Heart right ventricle (tissue), 16 donors: ENCODE measurements at regions of chr14 and their contacts with region 1.

Region 1: DNA sequence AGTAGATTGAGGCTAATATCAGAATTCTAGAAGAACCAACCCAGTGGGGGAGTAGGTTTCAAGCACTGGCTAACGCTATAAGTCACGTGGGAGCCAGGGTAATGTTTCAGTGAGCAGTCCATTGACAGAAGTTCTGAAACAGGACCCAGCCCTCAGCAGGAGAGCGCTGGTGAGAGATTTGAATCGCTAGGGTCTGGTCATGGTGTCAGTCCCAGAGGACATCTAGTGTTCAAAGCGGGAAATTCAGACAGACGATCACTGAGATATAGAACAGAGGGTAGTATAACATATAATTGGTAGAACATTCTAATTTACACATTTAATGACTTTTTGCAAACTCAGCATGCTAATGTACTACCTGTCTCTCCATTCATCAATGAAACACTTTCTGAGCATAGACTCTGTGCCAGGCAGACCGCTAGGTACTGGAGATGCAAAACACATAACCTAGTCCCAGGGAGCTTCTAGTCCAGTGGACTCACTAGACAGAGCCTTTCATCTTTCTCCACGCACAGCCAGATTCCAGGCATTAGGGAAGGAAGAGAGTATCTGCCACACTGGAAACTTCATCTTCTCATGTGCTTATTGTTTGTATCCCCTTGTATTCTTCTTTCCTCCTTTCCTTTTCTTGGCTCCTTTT is 35.4 kb upstream of the RNASE3 start:
- DNase-seq: peak in 1 of 2 donors; percentile 57
- ATAC-seq: peak; percentile 82 to 96 (median 90)
- H3K4me3 ChIP-seq: no peak overlapping the region
- H3K27ac ChIP-seq: no peak overlapping the region
- H3K4me1 ChIP-seq: peaks cover 0 to 7% (median 0%) of the 10 kb centered on the region in 9 donors
- H3K27me3 ChIP-seq: peaks cover 0 to 22% (median 9%) of the 10 kb centered on the region in 7 donors
- CTCF ChIP-seq: peak; percentile 55 to 82 (median 77)

Region 2: DNA sequence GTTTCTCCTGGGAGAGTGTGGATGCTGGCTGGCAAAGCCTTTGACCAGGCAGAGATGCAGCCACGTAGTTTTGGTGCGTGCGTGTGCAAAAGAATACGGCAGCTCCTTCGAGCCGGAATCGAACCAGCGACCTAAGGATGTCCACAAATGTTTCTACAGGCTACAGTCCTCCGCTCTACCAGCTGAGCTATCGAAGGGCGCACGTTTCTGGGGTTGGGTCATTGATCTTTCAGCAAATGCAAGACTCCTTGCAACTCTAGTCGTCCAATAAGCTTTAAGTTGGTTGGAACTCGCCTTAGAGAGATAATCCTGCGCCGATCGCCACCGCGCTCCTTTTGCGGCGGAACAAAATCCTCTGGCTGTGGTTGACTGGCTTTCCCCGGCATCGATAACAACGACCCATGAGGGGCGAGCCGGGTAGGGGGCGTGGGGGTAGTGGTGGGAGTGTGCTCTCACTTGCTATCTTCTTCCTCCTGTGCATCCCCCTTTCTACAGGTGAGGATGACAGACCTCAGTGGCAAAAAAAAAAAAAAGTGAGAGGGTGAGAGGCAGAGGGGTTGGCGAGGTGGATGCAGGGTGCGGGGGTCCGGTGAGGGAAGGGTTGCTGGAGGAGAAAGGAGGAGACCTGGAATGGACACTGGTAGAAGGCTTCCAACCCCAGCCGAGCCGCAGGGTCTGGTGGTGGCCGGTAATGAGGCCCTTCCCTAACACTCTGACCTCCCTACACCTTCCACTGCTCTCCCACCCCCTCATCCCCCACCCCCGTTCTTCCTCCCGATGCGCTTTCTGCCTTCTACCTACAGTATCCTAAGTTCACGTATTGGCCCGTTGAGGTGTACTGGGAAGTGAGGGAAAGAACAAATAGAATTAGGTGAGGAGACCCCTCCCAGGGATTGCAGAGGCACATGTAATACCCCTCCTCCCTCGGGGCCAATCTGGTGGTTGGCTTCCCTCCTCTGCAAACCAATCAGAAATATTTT is 202.5 kb before region 1 on chr14:
- intact Hi-C with region 1: no loop called
- DNase-seq: no peak
- ATAC-seq: peak in 1 of 8 donors; percentile 15
- H3K4me3 ChIP-seq: no peak overlapping the region
- H3K27ac ChIP-seq: no peak overlapping the region
- H3K4me1 ChIP-seq: peaks cover 0 to 6% (median 0%) of the 10 kb centered on the region in 9 donors
- H3K27me3 ChIP-seq: peaks cover 14 to 99% (median 91%) of the 10 kb centered on the region in 7 donors
- CTCF ChIP-seq: no peak

Region 3: GRCh38 chr14:20697273-20698017 is 158.3 kb before region 1 on chr14:
- intact Hi-C with region 1: loop called (anchors 1 to 5 kb)
- DNase-seq: peak; percentile 37 to 48
- ATAC-seq: peak; percentile 69 to 87 (median 76)
- H3K4me3 ChIP-seq: no peak overlapping the region
- H3K27ac ChIP-seq: no peak overlapping the region
- H3K4me1 ChIP-seq: peaks cover 0 to 10% (median 0%) of the 10 kb centered on the region in 9 donors
- H3K27me3 ChIP-seq: no peaks in the 10 kb centered on the region
- CTCF ChIP-seq: peak; percentile 63 to 87 (median 82)

Region 4: DNA sequence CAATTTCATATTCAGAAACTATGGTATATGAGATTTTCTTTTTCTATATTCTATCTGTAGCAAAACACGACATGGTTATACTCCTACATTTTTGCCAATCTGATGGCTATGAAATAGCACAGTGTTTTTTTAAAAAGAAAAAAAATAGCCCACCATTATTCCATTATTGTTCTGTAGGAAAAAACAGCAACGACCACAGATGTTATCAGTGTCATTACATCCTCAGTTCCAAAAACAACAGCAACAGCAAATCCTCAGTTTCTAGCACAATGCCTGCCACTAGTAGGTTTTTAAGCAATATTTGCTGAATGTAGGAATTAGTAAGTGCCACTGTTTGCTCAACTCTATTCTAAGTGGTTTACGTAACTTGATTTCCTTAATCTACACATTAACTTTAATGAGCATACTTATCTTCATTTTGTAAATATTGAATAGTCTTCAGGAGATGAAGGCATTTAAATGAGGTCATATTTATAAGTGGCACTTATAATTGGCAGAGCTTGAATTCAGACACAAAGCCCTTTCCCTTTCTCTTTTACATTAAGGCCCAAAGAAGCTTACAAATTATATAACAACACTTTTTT is 66.5 kb before region 1 on chr14:
- intact Hi-C with region 1: no loop called
- DNase-seq: peak in 1 of 2 donors; percentile 11
- ATAC-seq: peak in 5 of 8 donors; percentile 49 to 79 (median 58)
- H3K4me3 ChIP-seq: no peak overlapping the region
- H3K27ac ChIP-seq: peak overlapping the region in 7 of 10 donors; percentile 20 to 70 (median 45)
- H3K4me1 ChIP-seq: peaks cover 0 to 36% (median 11%) of the 10 kb centered on the region in 9 donors
- H3K27me3 ChIP-seq: no peaks in the 10 kb centered on the region
- CTCF ChIP-seq: no peak

Region 5: GRCh38 chr14:20799892-20800544 is 55.8 kb before region 1 on chr14:
- intact Hi-C with region 1: loop called in 1 of 10 experiments (anchors 10 kb)
- DNase-seq: peak; percentile 44 to 59
- ATAC-seq: peak; percentile 62 to 77 (median 76)
- H3K4me3 ChIP-seq: peak overlapping the region; percentile 43 to 66 (median 60)
- H3K27ac ChIP-seq: peak overlapping the region; percentile 56 to 91 (median 83)
- H3K4me1 ChIP-seq: peaks cover 3 to 68% (median 28%) of the 10 kb centered on the region in 9 donors
- H3K27me3 ChIP-seq: no peaks in the 10 kb centered on the region
- CTCF ChIP-seq: no peak

Region 6: GRCh38 chr14:20904393-20905029 is 48.7 kb after region 1 on chr14:
- intact Hi-C with region 1: no loop called
- DNase-seq: no peak
- ATAC-seq: no peak
- H3K4me3 ChIP-seq: no peak overlapping the region
- H3K27ac ChIP-seq: no peak overlapping the region
- H3K4me1 ChIP-seq: peaks cover 0 to 5% (median 0%) of the 10 kb centered on the region in 9 donors
- H3K27me3 ChIP-seq: peaks cover 0 to 6% (median 0%) of the 10 kb centered on the region in 7 donors
- CTCF ChIP-seq: no peak

Region 7: DNA sequence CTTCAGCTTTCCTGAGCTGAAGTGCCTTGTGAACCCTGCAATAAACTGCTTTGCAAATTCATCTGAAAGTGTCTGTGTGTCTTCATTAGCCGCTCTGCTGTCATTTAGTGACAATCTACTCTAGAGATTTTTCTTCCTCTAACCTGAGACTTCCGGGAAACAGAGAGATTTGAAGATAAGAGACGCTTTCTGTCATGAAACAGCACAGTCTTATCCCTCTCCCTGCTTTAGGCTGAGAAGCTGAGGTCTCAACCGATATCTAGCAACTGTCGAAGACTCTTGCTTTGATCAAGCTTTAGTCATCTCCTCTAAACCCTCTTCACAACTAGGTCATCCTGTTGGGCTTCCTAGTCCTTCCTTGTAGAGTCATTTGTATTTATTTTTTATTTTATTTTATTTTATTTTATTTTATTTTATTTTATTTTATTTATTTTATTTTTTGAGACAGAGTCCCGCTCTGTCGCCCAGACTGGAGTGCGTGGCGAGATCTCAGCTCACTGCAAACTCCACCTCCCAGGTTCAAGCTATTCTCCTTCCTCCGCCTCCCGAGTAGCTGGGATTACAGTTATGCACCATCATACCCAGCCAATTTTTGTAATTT is 100.7 kb after region 1 on chr14:
- intact Hi-C with region 1: loop called in 1 of 10 experiments (anchors 5 kb)
- DNase-seq: no peak
- ATAC-seq: no peak
- H3K4me3 ChIP-seq: no peak overlapping the region
- H3K27ac ChIP-seq: no peak overlapping the region
- H3K4me1 ChIP-seq: peaks cover 0 to 18% (median 0%) of the 10 kb centered on the region in 9 donors
- H3K27me3 ChIP-seq: peaks cover 0 to 14% (median 10%) of the 10 kb centered on the region in 7 donors
- CTCF ChIP-seq: no peak

Region 8: DNA sequence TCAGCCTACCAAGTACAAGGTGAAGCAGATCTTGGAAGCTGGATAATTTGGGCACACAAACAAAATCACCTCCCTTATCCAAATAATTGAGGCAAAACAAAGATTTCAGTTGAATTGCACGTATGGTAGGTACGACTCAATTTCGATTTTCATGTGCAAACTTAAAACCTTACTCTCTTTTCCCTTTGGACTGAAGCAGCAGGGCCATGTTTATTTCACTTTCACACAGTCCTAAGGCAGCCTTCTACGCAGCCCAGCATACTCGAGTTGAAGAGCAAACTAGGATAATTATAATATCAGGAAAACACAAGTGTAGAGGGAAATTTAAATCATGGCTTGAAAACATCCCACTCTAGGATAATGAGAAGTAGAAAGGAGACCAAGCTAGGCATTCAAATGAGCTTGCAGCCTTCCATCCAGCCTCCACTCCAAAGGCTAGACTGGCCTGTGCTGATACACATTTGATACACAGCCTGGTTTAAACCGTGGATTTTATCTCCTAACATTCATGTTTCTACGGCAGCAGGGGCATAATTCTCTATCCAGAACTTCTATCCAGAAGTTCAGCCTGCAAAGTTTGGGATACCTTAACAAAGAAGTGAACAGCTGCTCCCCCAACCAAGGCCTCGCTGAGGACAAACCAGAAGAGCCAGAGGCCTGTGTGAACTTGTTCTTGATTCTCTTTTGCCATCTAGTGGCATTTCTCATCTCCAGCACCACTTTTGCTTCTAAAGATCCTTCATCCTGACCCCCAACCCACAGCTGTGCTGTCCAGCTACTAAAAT is 184.0 kb after region 1 on chr14:
- intact Hi-C with region 1: loop called in 5 of 10 experiments (anchors 2 to 10 kb)
- DNase-seq: peak in 1 of 2 donors; percentile 64
- ATAC-seq: peak; percentile 62 to 84 (median 72)
- H3K4me3 ChIP-seq: peak overlapping the region in 2 of 10 donors; percentile 12 to 13
- H3K27ac ChIP-seq: peak overlapping the region in 9 of 10 donors; percentile 63 to 87 (median 77)
- H3K4me1 ChIP-seq: peaks cover 13 to 53% (median 41%) of the 10 kb centered on the region in 9 donors
- H3K27me3 ChIP-seq: peaks cover 0 to under 1% (median 0%) of the 10 kb centered on the region in 7 donors
- CTCF ChIP-seq: peak; percentile 45 to 82 (median 73)

Region 9: DNA sequence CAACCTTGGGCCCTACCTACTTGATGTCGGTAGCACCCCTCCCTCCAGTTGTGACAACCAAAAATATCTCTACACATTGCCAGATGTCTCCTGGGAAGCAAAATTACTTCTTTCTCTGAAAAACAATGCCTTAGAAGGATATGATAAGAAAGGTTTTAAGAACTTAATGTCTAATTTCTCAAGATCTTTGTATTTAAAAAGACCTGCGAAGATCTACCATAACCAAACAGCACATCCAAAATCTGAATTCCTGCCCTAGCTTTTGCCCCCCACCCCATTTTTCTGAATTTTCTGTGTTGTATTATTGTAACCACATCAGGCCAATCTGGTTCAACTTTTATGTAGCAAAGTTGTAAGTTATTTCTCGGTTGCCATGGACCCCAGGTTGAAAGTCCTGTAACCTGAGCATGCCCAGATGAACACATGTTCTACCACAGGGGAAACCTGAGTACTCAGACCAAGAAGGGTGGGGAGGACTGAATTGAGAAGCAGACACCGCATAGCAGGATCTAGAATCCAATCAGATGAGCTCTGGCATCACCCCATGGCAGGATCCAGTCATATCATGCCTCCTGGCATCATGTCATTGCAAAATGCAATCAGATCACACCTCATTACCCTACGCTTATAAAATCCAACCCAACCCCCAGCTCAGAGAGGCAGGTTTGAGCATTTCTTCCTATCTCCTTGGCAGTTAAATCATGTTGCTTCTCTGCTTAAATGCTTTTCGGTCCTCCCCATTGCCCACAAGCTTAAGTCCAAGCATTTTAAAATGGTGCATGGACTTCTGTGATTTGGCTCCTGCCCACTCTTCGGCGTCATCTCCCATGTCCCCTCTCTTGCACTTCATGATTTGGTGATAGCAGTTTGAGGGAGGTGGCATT is 253.8 kb after region 1 on chr14:
- intact Hi-C with region 1: loop called in 5 of 10 experiments (anchors 5 to 10 kb)
- DNase-seq: no peak
- ATAC-seq: no peak
- H3K4me3 ChIP-seq: no peak overlapping the region
- H3K27ac ChIP-seq: no peak overlapping the region
- H3K4me1 ChIP-seq: peaks cover 3 to 33% (median 22%) of the 10 kb centered on the region in 9 donors
- H3K27me3 ChIP-seq: no peaks in the 10 kb centered on the region
- CTCF ChIP-seq: no peak